K562 (cell line): ENCODE measurements at regions of chr1 and their contacts with region 1.

Region 1: GRCh38 chr1:87045761-87046304 is 131.4 kb downstream of the HS2ST1 start:
- DNase-seq: no peak
- ATAC-seq: no peak
- H3K4me3 ChIP-seq: no peak overlapping the region
- H3K27ac ChIP-seq: no peak overlapping the region
- H3K4me1 ChIP-seq: no peaks in the 10 kb centered on the region
- H3K27me3 ChIP-seq: no peaks in the 10 kb centered on the region
- CTCF ChIP-seq: no peak
- EP300 ChIP-seq: no peak
- POLR2A ChIP-seq: no peak
- RAD21 ChIP-seq: no peak

Region 2: GRCh38 chr1:87034351-87034750 is 11.5 kb before region 1 on chr1:
- CTCF ChIA-PET with region 1: no interaction called
- POLR2A ChIA-PET with region 1: interaction called, 13 read pairs
- in situ Hi-C with region 1: no loop called
- intact Hi-C with region 1: no loop called
- DNase-seq: no peak
- ATAC-seq: no peak
- H3K4me3 ChIP-seq: no peak overlapping the region
- H3K27ac ChIP-seq: no peak overlapping the region
- H3K4me1 ChIP-seq: no peaks in the 10 kb centered on the region; a peak in 1 of 5 replicates
- H3K27me3 ChIP-seq: no peaks in the 10 kb centered on the region
- CTCF ChIP-seq: no peak
- EP300 ChIP-seq: no peak
- POLR2A ChIP-seq: no peak
- RAD21 ChIP-seq: no peak